ENCODE measurements at regions of chr17 and their contacts with region 1.

Region 1: DNA sequence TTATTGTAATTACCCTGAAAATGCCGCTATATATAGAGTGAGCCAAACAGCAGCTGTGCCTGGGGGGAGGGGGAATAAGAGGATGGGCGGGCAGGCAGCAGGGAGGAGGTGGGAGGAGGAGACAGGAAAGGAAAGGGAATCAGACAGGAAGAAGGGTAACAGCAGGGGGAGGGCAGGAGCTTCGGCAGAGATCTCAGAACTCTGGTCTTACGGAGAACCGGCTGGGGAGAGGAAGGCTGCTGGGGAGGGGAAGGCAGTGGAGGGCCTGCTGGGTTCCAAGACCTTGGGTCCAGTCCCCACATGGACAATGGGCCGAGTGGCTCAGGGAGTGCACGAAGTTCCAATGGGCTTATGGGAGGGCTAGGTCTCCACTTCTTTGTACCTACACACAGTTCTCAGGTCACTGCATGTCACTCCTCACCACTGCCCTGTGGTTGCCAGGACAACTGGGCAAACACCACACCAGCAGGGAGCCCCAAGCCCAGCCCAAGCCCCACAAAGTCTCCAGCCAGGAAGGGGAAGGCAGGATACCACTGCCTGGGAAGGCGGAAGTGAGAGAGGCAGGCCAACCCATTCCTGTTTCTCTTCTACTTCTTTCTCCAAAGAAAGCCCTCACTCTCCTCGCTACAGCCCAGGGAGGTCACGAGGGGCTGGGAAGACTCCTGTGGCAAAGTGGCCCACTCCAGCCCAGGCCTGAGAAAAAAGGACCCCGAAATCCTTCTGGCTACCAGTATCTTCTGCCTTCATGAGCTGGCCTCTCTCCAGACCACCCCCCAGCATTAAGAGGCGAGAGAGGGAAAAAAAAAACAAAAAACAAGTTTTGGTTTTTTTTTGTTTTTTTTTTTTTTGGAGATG is 25.3 kb downstream of the G6PC3 start:
- DNase-seq: no peak
- ATAC-seq: peak in 1 of 4 experiments; percentile 28
- H3K4me3 ChIP-seq: no peak overlapping the region
- H3K4me3 Mint-ChIP-seq: peak overlapping the region in 1 of 3 donors; percentile 28
- H3K27ac ChIP-seq: no peak overlapping the region
- H3K27ac Mint-ChIP-seq: no peak overlapping the region
- H3K4me1 ChIP-seq: peaks cover 3 to 21% of the 10 kb centered on the region in 2 experiments
- H3K4me1 Mint-ChIP-seq: peaks cover 10 to 13% (median 13%) of the 10 kb centered on the region in 3 donors
- H3K27me3 ChIP-seq: no peaks in the 10 kb centered on the region
- H3K27me3 Mint-ChIP-seq: no peaks in the 10 kb centered on the region

Region 2: GRCh38 chr17:44108440-44109324 is 12.8 kb after region 1 on chr17:
- CTCF ChIA-PET with region 1: no interaction called
- POLR2A ChIA-PET with region 1: no interaction called
- DNase-seq: no peak
- ATAC-seq: no peak
- H3K4me3 ChIP-seq: no peak overlapping the region
- H3K4me3 Mint-ChIP-seq: no peak overlapping the region
- H3K27ac ChIP-seq: no peak overlapping the region
- H3K27ac Mint-ChIP-seq: no peak overlapping the region
- H3K4me1 ChIP-seq: peaks cover 6 to 37% of the 10 kb centered on the region in 2 experiments
- H3K4me1 Mint-ChIP-seq: peaks cover 24 to 34% (median 31%) of the 10 kb centered on the region in 3 donors
- H3K27me3 ChIP-seq: no peaks in the 10 kb centered on the region
- H3K27me3 Mint-ChIP-seq: no peaks in the 10 kb centered on the region

Region 3: GRCh38 chr17:44123356-44124117 is 27.7 kb after region 1 on chr17 and contains the start of gene HDAC5:
- CTCF ChIA-PET with region 1: interaction called in 1 of 2 experiments, 4 read pairs
- POLR2A ChIA-PET with region 1: interaction called in 1 of 2 experiments, 10 read pairs
- DNase-seq: peak; percentile 92 to 98 (median 96)
- ATAC-seq: peak; percentile 93 to 98 (median 94)
- H3K4me3 ChIP-seq: peak within 1 kb of the TSS; percentile 91 to 95
- H3K4me3 Mint-ChIP-seq: peak within 1 kb of the TSS; percentile 83 to 94 (median 87)
- H3K27ac ChIP-seq: peak within 1 kb of the TSS; percentile 82
- H3K27ac Mint-ChIP-seq: peak within 1 kb of the TSS; percentile 91 to 96
- H3K4me1 ChIP-seq: peaks cover 16 to 44% of the 10 kb centered on the region in 2 experiments
- H3K4me1 Mint-ChIP-seq: peaks cover 43 to 47% (median 46%) of the 10 kb centered on the region in 3 donors
- H3K27me3 ChIP-seq: no peaks in the 10 kb centered on the region
- H3K27me3 Mint-ChIP-seq: no peaks in the 10 kb centered on the region
- total RNA-seq, gene HDAC5: 68.6 to 81.4 (median 72.8) TPM

Region 4: DNA sequence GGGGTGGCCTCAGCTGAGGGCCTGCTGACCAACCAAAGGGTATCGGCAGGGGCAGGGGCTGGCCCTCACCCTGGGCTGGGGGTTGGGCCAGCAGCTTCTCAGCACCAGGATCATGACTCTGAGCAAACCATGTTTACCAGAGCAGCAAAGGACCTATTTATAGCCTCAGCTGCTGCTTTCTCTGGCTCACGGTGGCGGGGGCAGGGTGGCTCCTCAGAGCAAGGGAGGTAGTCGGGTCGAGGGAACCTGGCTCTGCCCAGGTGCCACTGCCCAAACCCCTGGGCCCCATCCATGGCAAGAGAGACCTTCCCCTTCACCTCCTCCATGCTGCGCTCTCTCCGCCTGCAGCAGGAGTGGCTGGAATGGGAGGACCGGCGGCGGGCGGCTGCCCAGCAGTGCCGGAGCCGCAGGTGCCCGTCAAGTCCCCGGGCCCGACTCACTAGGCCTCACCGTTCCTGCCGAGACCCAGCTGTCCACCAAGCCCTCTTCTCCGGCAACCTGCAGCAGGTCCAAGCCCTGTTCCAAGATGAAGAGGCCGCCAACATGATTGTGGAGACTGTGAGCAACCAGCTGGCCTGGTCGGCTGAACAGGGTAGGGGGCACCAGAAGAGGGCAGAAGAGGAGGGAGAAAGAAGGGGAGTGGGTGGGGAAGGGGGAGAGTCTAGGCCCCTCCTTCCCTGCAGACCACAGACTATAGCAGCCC is 74.8 kb after region 1 on chr17 and contains the start of gene ASB16:
- CTCF ChIA-PET with region 1: interaction called in 1 of 2 experiments, 5 read pairs
- POLR2A ChIA-PET with region 1: interaction called in 1 of 2 experiments, 13 read pairs
- DNase-seq: no peak
- ATAC-seq: no peak
- H3K4me3 ChIP-seq: no peak within 1 kb of the TSS
- H3K4me3 Mint-ChIP-seq: no peak within 1 kb of the TSS
- H3K27ac ChIP-seq: no peak within 1 kb of the TSS
- H3K27ac Mint-ChIP-seq: peak within 1 kb of the TSS in 1 of 2 donors; percentile 66
- H3K4me1 ChIP-seq: peaks cover 0 to 12% of the 10 kb centered on the region in 2 experiments
- H3K4me1 Mint-ChIP-seq: peaks cover 9 to 15% (median 13%) of the 10 kb centered on the region in 3 donors
- H3K27me3 ChIP-seq: no peaks in the 10 kb centered on the region
- H3K27me3 Mint-ChIP-seq: no peaks in the 10 kb centered on the region
- total RNA-seq, gene ASB16: 0.15 TPM in 1 of 5 donors, not detected in the others

Measured in T-cell (primary cell).